Activated CD4-positive, alpha-beta T cell treated with anti-CD3 and anti-CD28 coated beads, Interleukin-2, amount 10 ng/mL, durations not matched to agents 7 days and 5 days (primary cell): ENCODE measurements at regions of chr5 and their contacts with region 1.

Region 1: GRCh38 chr5:103119765-103120606 is at the starts of genes GIN1 and PPIP5K2:
- DNase-seq: peak; percentile 98
- H3K4me3 Mint-ChIP-seq: peak within 1 kb of the TSS; percentile 90
- H3K27ac Mint-ChIP-seq: peak within 1 kb of the TSS; percentile 100
- H3K4me1 Mint-ChIP-seq: peaks cover 52% of the 10 kb centered on the region
- H3K27me3 Mint-ChIP-seq: no peaks in the 10 kb centered on the region
- total RNA-seq, gene GIN1: 8.7 to 11.0 TPM
- total RNA-seq, gene PPIP5K2: 60.5 to 67.1 TPM

Region 2: GRCh38 chr5:103139264-103139865 is 19.4 kb after region 1 on chr5:
- CTCF ChIA-PET with region 1: interaction called, 10 read pairs
- POLR2A ChIA-PET with region 1: no interaction called
- DNase-seq: peak; percentile 88
- H3K4me3 Mint-ChIP-seq: no peak overlapping the region
- H3K27ac Mint-ChIP-seq: no peak overlapping the region
- H3K4me1 Mint-ChIP-seq: peaks cover 3% of the 10 kb centered on the region
- H3K27me3 Mint-ChIP-seq: no peaks in the 10 kb centered on the region